Psoas muscle (tissue), 8 donors: ENCODE measurements at regions of chr10 and their contacts with region 1.

Region 1: GRCh38 chr10:132627666-132628531 is 90.3 kb downstream of the INPP5A start:
- DNase-seq: peak; percentile 37 to 62
- ATAC-seq: peak; percentile 11 to 28 (median 20)
- H3K4me3 ChIP-seq: peak overlapping the region; percentile 19
- H3K27ac ChIP-seq: peak overlapping the region; percentile 98
- H3K4me1 ChIP-seq: peaks cover 67% of the 10 kb centered on the region
- H3K27me3 ChIP-seq: no peaks in the 10 kb centered on the region
- CTCF ChIP-seq: no peak

Region 2: GRCh38 chr10:132516771-132517725 is 110.9 kb before region 1 on chr10:
- intact Hi-C with region 1: loop called (anchors 5 to 10 kb)
- DNase-seq: peak; percentile 94 to 97
- ATAC-seq: peak; percentile 90 to 96 (median 92)
- H3K4me3 ChIP-seq: peak overlapping the region; percentile 53
- H3K27ac ChIP-seq: peak overlapping the region; percentile 89
- H3K4me1 ChIP-seq: peaks cover 47% of the 10 kb centered on the region
- H3K27me3 ChIP-seq: no peaks in the 10 kb centered on the region
- CTCF ChIP-seq: no peak

Region 3: DNA sequence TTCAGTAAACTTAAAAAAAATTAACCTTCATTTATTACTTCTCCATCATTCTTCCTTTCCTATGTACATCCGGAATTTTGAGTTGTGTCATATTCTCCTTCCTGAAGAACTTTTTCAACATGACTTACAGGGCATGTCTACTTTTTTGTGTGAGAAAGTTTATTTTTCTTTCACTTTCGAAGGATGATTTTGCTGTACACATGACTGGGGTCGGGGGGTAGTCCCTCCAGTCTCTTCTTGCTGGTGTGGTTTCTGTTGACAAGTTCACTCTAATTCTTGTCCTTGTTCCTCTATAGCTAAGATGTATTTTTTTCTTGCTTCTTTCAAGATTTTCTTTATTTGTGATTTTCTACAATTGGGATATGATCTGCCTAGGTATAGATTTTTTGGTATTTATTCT is 34.5 kb before region 1 on chr10:
- intact Hi-C with region 1: loop called (anchors 5 kb)
- DNase-seq: no peak
- ATAC-seq: no peak
- H3K4me3 ChIP-seq: peak overlapping the region; percentile 28
- H3K27ac ChIP-seq: no peak overlapping the region
- H3K4me1 ChIP-seq: peaks cover 50% of the 10 kb centered on the region
- H3K27me3 ChIP-seq: no peaks in the 10 kb centered on the region
- CTCF ChIP-seq: no peak